Activated CD4-positive, alpha-beta memory T cell treated with anti-CD3 and anti-CD28 coated beads, Interleukin-2, amount 10 ng/mL, durations not matched to agents 7 days and 5 days (primary cell): ENCODE measurements at regions of chr6 and their contacts with region 1.

Region 1: GRCh38 chr6:29649701-29650673 is 6.9 kb upstream of the MOG start:
- DNase-seq: peak; percentile 98
- H3K4me3 Mint-ChIP-seq: peak overlapping the region; percentile 87
- H3K27ac Mint-ChIP-seq: peak overlapping the region; percentile 96
- H3K4me1 Mint-ChIP-seq: peaks cover 12% of the 10 kb centered on the region
- H3K27me3 Mint-ChIP-seq: peaks cover 6% of the 10 kb centered on the region

Region 2: GRCh38 chr6:29559524-29560287 is 90.3 kb before region 1 on chr6 and contains the start of gene UBD:
- CTCF ChIA-PET with region 1: no interaction called
- POLR2A ChIA-PET with region 1: no interaction called
- DNase-seq: no peak
- H3K4me3 Mint-ChIP-seq: no peak within 1 kb of the TSS
- H3K27ac Mint-ChIP-seq: no peak within 1 kb of the TSS
- H3K4me1 Mint-ChIP-seq: peaks cover 7% of the 10 kb centered on the region
- H3K27me3 Mint-ChIP-seq: peaks cover 48% of the 10 kb centered on the region
- total RNA-seq, gene UBD: 0.38 to 0.40 TPM

Region 3: DNA sequence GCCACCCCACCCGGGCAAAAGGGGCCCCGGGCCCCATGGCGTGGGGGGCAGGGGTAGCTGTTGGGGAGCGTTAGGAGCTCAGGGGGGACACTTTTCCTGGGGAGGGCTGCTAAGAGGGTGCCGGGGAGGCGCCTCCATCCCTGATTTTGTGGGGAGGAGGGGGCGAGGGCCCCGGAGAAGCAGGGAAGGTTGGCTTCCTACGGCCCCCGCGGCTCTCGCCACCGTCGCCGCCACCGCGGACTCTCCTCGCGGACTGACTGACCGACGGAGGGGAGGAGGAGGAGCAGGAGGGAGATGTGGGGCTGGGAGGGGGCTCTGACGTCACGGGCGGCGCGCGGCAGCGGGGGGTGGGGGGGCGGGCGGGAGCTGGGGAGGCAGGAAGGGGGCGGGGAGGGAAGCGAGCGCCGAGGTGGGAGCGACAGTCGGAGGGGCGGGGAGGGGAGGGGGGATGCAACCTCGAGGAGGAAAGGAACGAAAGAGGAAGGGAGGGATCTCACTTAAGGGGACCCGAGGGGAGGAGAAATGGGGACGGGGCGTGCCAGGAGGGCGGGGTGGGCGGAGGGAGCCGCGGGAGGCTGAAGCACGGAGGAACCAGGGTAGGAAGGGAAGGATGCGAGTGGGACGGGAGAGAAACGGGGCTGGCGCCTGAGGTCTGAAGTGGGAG is 22.1 kb before region 1 on chr6:
- CTCF ChIA-PET with region 1: interaction called, 24 read pairs
- POLR2A ChIA-PET with region 1: interaction called, 11 read pairs
- DNase-seq: peak; percentile 45
- H3K4me3 Mint-ChIP-seq: peak overlapping the region; percentile 79
- H3K27ac Mint-ChIP-seq: no peak overlapping the region
- H3K4me1 Mint-ChIP-seq: peaks cover 39% of the 10 kb centered on the region
- H3K27me3 Mint-ChIP-seq: peaks cover 52% of the 10 kb centered on the region

Region 4: DNA sequence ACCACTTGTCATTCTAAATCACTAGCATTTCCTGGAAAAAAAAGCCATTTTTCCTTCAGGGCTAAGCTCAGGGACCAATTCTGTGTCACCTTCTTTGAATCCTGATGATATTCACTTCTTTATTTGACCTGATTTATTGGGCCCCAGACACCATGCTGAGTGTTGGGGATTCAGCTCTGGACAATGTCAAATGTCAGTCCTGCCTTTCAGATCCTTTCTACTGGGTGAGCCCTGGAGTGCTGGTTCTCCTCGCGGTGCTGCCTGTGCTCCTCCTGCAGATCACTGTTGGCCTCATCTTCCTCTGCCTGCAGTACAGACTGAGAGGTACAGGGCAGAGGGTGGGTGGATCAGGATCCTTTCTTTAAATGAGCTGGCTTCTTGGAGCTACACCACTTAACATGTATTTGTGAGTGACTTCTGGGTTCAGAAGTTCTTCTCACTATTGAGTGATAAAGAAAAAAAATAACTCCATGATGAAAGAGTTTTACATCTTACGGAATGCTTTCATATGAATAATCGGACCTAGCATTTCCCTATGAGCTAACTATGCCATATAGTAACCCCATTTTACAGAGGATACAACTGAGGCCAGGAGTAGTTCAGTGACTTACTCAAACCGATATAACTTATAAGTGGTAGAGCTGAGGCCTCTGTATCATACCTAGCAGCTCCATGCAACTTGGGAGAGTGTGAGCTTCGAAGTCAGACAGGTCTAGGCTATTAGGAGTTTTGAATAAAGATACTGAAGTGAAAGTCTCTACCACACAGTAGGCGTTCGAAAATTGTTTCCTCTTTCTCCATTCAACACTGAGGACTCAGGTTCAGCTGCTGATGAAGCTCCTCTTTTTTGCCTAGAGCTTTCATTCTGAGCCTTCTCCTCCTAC is 16.2 kb after region 1 on chr6:
- CTCF ChIA-PET with region 1: interaction called, 29 read pairs
- POLR2A ChIA-PET with region 1: interaction called, 9 read pairs
- DNase-seq: no peak
- H3K4me3 Mint-ChIP-seq: no peak overlapping the region
- H3K27ac Mint-ChIP-seq: no peak overlapping the region
- H3K4me1 Mint-ChIP-seq: no peaks in the 10 kb centered on the region
- H3K27me3 Mint-ChIP-seq: peaks cover 33% of the 10 kb centered on the region

Region 5: GRCh38 chr6:29696155-29697125 is 46.5 kb after region 1 on chr6:
- CTCF ChIA-PET with region 1: interaction called, 26 read pairs
- POLR2A ChIA-PET with region 1: no interaction called
- DNase-seq: no peak
- H3K4me3 Mint-ChIP-seq: no peak overlapping the region
- H3K27ac Mint-ChIP-seq: no peak overlapping the region
- H3K4me1 Mint-ChIP-seq: no peaks in the 10 kb centered on the region
- H3K27me3 Mint-ChIP-seq: peaks cover 10% of the 10 kb centered on the region

Region 6: DNA sequence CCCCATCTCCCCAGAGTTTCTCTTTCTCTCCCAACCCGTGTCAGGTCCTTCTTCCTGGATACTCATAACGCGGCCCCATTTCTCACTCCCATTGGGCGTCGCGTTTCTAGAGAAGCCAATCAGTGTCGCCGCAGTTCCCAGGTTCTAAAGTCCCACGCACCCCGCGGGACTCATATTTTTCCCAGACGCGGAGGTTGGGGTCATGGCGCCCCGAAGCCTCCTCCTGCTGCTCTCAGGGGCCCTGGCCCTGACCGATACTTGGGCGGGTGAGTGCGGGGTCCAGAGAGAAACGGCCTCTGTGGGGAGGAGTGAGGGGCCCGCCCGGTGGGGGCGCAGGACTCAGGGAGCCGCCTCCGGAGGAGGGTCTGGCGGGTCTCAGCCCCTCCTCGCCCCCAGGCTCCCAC is 73.3 kb after region 1 on chr6 and contains the start of gene HLA-F:
- CTCF ChIA-PET with region 1: interaction called, 11 read pairs
- POLR2A ChIA-PET with region 1: interaction called, 4 read pairs
- DNase-seq: peak; percentile 85
- H3K4me3 Mint-ChIP-seq: peak within 1 kb of the TSS; percentile 89
- H3K27ac Mint-ChIP-seq: peak within 1 kb of the TSS; percentile 76
- H3K4me1 Mint-ChIP-seq: peaks cover 53% of the 10 kb centered on the region
- H3K27me3 Mint-ChIP-seq: no peaks in the 10 kb centered on the region
- total RNA-seq, gene HLA-F: 318 to 346 TPM

Region 7: DNA sequence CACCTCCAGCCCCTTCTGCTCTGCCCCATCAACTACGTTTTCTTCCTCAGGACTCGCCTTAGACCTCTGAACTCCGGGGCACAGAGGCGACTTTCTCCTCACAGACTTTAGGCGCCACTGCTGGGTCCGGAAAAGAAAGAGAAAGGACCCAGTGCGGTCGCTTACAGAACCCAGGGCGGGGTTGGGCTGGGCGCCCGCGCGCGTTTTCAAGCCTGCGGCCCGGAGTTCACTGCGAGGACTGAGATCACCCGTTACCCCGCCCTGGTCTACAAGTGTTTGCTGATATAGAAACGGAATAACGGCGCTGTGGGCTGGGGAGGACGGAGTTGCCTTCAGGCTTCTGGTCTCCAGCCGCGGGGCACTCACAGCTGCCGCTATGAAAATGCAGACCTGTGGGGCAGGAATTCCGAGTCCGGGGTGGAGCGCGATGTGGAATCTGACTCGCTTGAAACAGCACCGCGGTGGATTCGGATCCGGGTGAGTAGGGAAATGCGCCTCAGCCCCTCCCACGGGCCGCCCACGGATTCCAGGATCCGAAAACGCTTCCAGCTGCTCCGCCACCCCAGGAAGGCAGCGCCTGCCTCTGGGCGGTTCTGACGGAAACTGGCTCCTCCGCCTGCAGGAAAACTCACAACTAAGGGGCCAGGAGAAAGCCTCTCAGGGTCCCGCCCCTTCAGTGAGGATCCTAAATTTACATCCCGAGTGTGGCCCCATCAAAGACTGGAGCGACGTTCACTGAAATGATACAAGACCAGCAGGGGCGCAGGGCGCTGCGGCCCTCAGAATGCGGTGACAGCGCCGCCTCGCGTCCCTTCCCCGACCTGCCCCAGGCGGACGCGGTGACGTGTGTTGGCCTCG is 102.7 kb after region 1 on chr6:
- CTCF ChIA-PET with region 1: interaction called, 16 read pairs
- POLR2A ChIA-PET with region 1: interaction called, 3 read pairs
- DNase-seq: peak; percentile 87
- H3K4me3 Mint-ChIP-seq: peak overlapping the region; percentile 83
- H3K27ac Mint-ChIP-seq: peak overlapping the region; percentile 87
- H3K4me1 Mint-ChIP-seq: peaks cover 52% of the 10 kb centered on the region
- H3K27me3 Mint-ChIP-seq: peaks cover 18% of the 10 kb centered on the region